AG04450 (cell line): ENCODE measurements at regions of chr7 and their contacts with region 1.

Region 1: GRCh38 chr7:137717811-137718271 is 128.9 kb downstream of the DGKI start:
- DNase-seq: no peak
- H3K4me3 ChIP-seq: no peak overlapping the region
- H3K27ac ChIP-seq: no peak overlapping the region
- H3K27me3 ChIP-seq: no peaks in the 10 kb centered on the region
- CTCF ChIP-seq: no peak

Region 2: DNA sequence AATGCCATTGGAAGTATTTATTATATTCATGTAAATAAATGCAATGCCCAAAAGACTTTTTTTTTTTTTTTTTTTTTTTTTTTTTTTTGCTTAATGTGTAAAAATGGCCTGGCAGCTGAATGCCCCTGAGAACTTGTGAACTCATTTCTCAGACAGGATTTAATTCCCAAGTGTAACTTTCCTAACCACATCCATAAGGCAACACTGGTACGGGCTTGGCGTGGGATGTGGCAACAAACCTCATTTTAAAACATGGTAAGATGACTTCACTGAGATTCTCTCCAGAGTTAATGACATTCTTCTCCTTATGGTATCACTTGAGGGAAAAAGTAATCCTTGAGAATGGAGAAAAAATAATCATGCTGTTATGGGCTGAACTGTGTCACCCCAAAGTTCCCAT is 21.5 kb before region 1 on chr7:
- CTCF ChIA-PET with region 1: interaction called, 10 read pairs
- POLR2A ChIA-PET with region 1: no interaction called
- DNase-seq: no peak
- H3K4me3 ChIP-seq: no peak overlapping the region
- H3K27ac ChIP-seq: no peak overlapping the region
- H3K27me3 ChIP-seq: no peaks in the 10 kb centered on the region
- CTCF ChIP-seq: no peak

Region 3: DNA sequence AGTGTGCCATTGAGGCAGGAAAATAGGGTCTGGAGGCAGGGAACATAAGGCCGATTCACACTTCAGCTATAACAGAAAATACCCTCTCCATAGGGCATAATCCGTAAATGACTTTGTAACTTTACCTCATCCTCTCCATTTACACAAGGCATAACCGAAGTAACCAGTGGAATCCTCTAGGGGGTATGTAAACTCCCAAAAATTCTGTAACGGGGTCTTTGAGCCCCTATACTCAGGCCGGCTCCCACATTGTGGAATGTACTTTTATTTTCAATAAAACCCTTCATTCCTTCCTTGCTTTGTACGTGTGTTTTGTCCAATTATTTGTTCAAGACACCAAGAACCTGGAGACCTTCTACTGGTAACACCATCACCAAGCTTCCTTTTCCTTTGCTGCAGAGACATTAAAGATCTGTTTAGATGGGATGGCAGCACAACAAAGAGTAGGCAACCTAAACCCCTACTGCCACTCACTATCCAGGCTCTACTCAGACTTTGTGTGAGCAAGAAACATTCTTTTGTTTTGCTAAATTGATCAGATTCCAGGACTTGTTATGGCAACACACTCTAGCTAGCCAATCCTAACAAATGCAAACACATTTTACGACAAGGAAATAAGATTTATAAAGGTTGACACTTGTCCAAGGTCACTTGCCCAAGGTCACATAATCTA is 29.7 kb after region 1 on chr7:
- CTCF ChIA-PET with region 1: no interaction called
- POLR2A ChIA-PET with region 1: no interaction called
- DNase-seq: no peak
- H3K4me3 ChIP-seq: no peak overlapping the region
- H3K27ac ChIP-seq: no peak overlapping the region
- H3K27me3 ChIP-seq: peaks cover 2% of the 10 kb centered on the region
- CTCF ChIP-seq: no peak

Region 4: DNA sequence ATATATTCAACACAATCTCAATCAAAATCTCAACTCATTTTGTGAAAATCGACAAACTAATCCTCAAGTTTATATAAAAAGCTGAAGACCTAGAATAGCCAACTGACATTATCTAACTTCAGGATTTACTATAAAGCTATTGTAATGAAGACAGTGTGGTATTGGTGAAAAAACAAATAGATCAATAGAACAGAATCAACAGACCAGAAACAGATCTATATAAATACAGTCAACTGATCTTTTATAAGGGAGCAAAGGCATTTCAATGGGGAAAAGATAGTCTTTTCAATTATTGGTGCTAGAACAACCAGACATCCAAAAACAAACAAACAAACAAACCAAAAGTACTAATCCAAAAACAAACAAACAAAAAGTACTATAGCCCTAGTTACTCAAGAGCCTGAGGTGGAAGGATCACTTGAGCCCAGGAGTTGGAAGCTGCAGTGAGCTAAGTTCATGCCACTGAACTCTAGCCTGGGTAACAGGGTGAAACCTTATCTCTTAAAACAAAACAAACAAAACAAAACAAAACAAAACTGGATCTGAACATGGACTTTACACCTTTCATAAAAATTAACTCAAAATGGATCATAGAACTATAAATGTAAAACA is 331.8 kb after region 1 on chr7:
- CTCF ChIA-PET with region 1: no interaction called
- POLR2A ChIA-PET with region 1: no interaction called
- DNase-seq: no peak
- H3K4me3 ChIP-seq: no peak overlapping the region
- H3K27ac ChIP-seq: no peak overlapping the region
- H3K27me3 ChIP-seq: no peaks in the 10 kb centered on the region
- CTCF ChIP-seq: no peak